CD4-positive, alpha-beta memory T cell (primary cell): ENCODE measurements at regions of chr1 and their contacts with region 1.

Region 1: DNA sequence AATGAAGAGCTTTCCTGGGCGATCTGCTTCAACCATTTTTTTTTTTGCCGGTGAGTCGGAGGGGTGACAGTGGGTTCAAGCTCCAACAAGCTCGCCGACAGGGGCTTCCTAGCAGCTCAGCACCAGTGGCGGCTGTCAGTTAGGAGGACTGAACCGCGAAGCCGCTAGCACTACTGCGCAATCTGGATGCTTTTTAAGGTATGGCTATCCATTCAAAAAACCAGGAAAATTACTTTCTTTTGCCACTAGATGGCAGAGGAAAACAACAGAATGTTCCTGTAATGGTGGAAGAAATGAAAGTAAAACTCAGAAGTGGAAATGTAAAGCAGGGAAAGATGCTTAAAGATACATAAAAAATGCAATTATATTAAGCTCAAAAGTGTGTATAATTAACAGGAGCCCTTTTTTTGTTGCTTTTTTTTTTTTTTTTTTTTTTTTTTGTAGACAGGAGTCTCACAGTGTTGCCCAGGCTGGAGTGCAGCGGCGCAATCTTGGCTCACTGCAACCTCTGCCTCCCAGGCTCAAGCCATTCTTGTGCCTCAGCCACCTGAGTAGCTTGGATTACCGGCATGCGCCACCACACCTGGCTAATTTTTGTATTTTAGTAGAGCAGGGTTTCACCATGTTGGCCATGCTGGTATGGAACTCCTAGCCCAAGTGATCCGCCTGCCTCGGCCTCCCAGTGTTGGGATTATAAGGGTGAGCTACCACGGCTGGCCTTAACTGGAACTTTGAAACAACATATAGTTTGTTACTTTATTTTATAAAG is 8.5 kb downstream of the KYAT3 start:
- DNase-seq: peak; percentile 63 to 73 (median 69)
- H3K4me3 ChIP-seq: no peak overlapping the region
- H3K4me3 Mint-ChIP-seq: peak overlapping the region; percentile 8 to 85 (median 64)
- H3K27ac ChIP-seq: peak overlapping the region; percentile 27
- H3K27ac Mint-ChIP-seq: peak overlapping the region; percentile 17 to 90 (median 85)
- H3K4me1 ChIP-seq: peaks cover 54% of the 10 kb centered on the region
- H3K4me1 Mint-ChIP-seq: peaks cover 43 to 82% (median 60%) of the 10 kb centered on the region in 4 donors
- H3K27me3 ChIP-seq: no peaks in the 10 kb centered on the region
- H3K27me3 Mint-ChIP-seq: no peaks in the 10 kb centered on the region

Region 2: GRCh38 chr1:88111806-88112205 is 872.2 kb before region 1 on chr1:
- CTCF ChIA-PET with region 1: no interaction called
- POLR2A ChIA-PET with region 1: no interaction called
- intact Hi-C with region 1: no loop called
- DNase-seq: no peak
- H3K4me3 ChIP-seq: no peak overlapping the region
- H3K4me3 Mint-ChIP-seq: no peak overlapping the region
- H3K27ac ChIP-seq: no peak overlapping the region
- H3K27ac Mint-ChIP-seq: no peak overlapping the region
- H3K4me1 ChIP-seq: no peaks in the 10 kb centered on the region
- H3K4me1 Mint-ChIP-seq: no peaks in the 10 kb centered on the region
- H3K27me3 ChIP-seq: no peaks in the 10 kb centered on the region
- H3K27me3 Mint-ChIP-seq: no peaks in the 10 kb centered on the region

Region 3: GRCh38 chr1:88867743-88868521 is 116.0 kb before region 1 on chr1:
- CTCF ChIA-PET with region 1: no interaction called
- POLR2A ChIA-PET with region 1: no interaction called
- intact Hi-C with region 1: no loop called
- DNase-seq: no peak
- H3K4me3 ChIP-seq: no peak overlapping the region
- H3K4me3 Mint-ChIP-seq: peak overlapping the region in 6 of 8 donors; percentile 18 to 65 (median 45)
- H3K27ac ChIP-seq: no peak overlapping the region
- H3K27ac Mint-ChIP-seq: peak overlapping the region in 6 of 7 donors; percentile 1 to 89 (median 14)
- H3K4me1 ChIP-seq: peaks cover 35% of the 10 kb centered on the region
- H3K4me1 Mint-ChIP-seq: peaks cover 36 to 71% (median 53%) of the 10 kb centered on the region in 4 donors
- H3K27me3 ChIP-seq: no peaks in the 10 kb centered on the region
- H3K27me3 Mint-ChIP-seq: no peaks in the 10 kb centered on the region

Region 4: DNA sequence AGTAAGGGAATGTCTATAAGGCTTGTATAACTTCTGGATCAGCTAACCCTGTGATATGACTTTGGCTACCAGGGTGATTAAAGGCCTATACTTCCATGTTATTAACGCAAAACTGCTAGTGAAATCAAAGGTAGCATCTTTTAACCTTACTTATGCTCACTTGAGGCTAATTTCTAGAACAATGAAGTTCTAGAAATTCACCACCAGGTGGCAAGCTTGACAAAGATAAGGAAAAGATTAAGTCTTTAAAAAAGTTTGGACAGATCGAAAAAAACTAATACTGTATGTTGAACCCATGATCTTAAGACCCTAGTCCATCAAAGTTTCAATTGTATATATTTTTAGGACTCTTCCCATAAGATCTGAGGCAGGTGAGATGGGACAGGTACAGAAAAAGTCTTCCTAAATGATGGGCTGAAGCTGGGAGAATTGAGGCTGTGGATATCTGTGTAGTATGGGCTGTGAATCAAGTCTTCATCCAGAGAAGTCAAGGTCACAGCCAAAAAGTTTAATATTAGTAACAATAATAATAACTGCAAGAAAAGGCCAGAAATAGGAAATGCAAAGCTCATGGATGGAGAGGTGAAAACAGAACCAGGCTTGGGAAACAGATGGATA is 10.3 kb before region 1 on chr1:
- CTCF ChIA-PET with region 1: interaction called, 71 read pairs
- POLR2A ChIA-PET with region 1: interaction called, 5 read pairs
- intact Hi-C with region 1: no loop called
- DNase-seq: peak in 4 of 5 donors; percentile 25 to 39 (median 33)
- H3K4me3 ChIP-seq: no peak overlapping the region
- H3K4me3 Mint-ChIP-seq: peak overlapping the region in 1 of 8 donors; percentile 0
- H3K27ac ChIP-seq: no peak overlapping the region
- H3K27ac Mint-ChIP-seq: peak overlapping the region in 3 of 7 donors; percentile 2 to 74 (median 26)
- H3K4me1 ChIP-seq: peaks cover 8% of the 10 kb centered on the region
- H3K4me1 Mint-ChIP-seq: peaks cover 15 to 23% (median 15%) of the 10 kb centered on the region in 4 donors
- H3K27me3 ChIP-seq: no peaks in the 10 kb centered on the region
- H3K27me3 Mint-ChIP-seq: no peaks in the 10 kb centered on the region

Region 5: GRCh38 chr1:89005286-89006151 is 21.5 kb after region 1 on chr1:
- CTCF ChIA-PET with region 1: interaction called, 56 read pairs
- POLR2A ChIA-PET with region 1: interaction called, 3 read pairs
- intact Hi-C with region 1: no loop called
- DNase-seq: no peak
- H3K4me3 ChIP-seq: no peak overlapping the region
- H3K4me3 Mint-ChIP-seq: no peak overlapping the region
- H3K27ac ChIP-seq: no peak overlapping the region
- H3K27ac Mint-ChIP-seq: peak overlapping the region in 4 of 7 donors; percentile 14 to 66 (median 63)
- H3K4me1 ChIP-seq: peaks cover 22% of the 10 kb centered on the region
- H3K4me1 Mint-ChIP-seq: peaks cover 22 to 47% (median 34%) of the 10 kb centered on the region in 4 donors
- H3K27me3 ChIP-seq: no peaks in the 10 kb centered on the region
- H3K27me3 Mint-ChIP-seq: no peaks in the 10 kb centered on the region

Region 6: DNA sequence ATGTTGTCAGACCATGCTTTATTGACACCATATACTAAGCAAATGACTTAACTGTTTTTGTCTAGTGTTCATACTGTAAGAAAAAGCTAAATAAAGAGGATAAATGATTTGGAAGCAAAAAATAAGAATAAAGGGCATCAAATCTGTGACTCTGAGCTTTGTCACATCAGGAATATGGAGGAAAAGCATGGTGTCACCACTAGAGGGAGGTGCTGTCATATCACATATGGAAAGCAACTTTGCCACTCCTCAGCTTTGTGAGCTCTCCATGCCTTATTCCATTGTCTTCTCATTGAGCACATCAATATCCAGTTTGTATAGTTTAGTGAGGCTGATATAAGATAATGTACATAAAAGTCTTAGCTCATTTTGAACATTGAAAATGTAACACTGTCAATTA is 101.8 kb after region 1 on chr1:
- CTCF ChIA-PET with region 1: interaction called, 19 read pairs
- POLR2A ChIA-PET with region 1: no interaction called
- intact Hi-C with region 1: no loop called
- DNase-seq: peak in 4 of 5 donors; percentile 45 to 66 (median 48)
- H3K4me3 ChIP-seq: no peak overlapping the region
- H3K4me3 Mint-ChIP-seq: no peak overlapping the region
- H3K27ac ChIP-seq: no peak overlapping the region
- H3K27ac Mint-ChIP-seq: no peak overlapping the region
- H3K4me1 ChIP-seq: no peaks in the 10 kb centered on the region
- H3K4me1 Mint-ChIP-seq: peaks cover 0 to 4% (median 2%) of the 10 kb centered on the region in 4 donors
- H3K27me3 ChIP-seq: no peaks in the 10 kb centered on the region
- H3K27me3 Mint-ChIP-seq: no peaks in the 10 kb centered on the region

Region 7: GRCh38 chr1:89358287-89358893 is 374.4 kb after region 1 on chr1:
- CTCF ChIA-PET with region 1: interaction called, 67 read pairs
- POLR2A ChIA-PET with region 1: interaction called, 3 read pairs
- intact Hi-C with region 1: loop called (anchors 1 kb)
- DNase-seq: peak; percentile 76 to 81 (median 77)
- H3K4me3 ChIP-seq: no peak overlapping the region
- H3K4me3 Mint-ChIP-seq: peak overlapping the region in 5 of 8 donors; percentile 0 to 80 (median 57)
- H3K27ac ChIP-seq: no peak overlapping the region
- H3K27ac Mint-ChIP-seq: peak overlapping the region in 5 of 7 donors; percentile 50 to 66 (median 57)
- H3K4me1 ChIP-seq: peaks cover 27% of the 10 kb centered on the region
- H3K4me1 Mint-ChIP-seq: peaks cover 15 to 29% (median 25%) of the 10 kb centered on the region in 4 donors
- H3K27me3 ChIP-seq: no peaks in the 10 kb centered on the region
- H3K27me3 Mint-ChIP-seq: no peaks in the 10 kb centered on the region